ENCODE measurements at regions of chr7 and their contacts with region 1.

Region 1: GRCh38 chr7:18140943-18141342 is 113.3 kb upstream of the PRPS1L1 start:
- DNase-seq: no peak
- ATAC-seq: no peak
- H3K4me3 ChIP-seq: no peak overlapping the region
- H3K4me3 Mint-ChIP-seq: no peak overlapping the region
- H3K27ac ChIP-seq: no peak overlapping the region
- H3K27ac Mint-ChIP-seq: no peak overlapping the region
- H3K4me1 ChIP-seq: no peaks in the 10 kb centered on the region
- H3K4me1 Mint-ChIP-seq: no peaks in the 10 kb centered on the region
- H3K27me3 ChIP-seq: no peaks in the 10 kb centered on the region
- H3K27me3 Mint-ChIP-seq: peaks cover 0 to 3% of the 10 kb centered on the region in 2 donors

Region 2: GRCh38 chr7:18119985-18120384 is 21.0 kb before region 1 on chr7:
- CTCF ChIA-PET with region 1: no interaction called
- POLR2A ChIA-PET with region 1: no interaction called
- DNase-seq: no peak
- ATAC-seq: no peak
- H3K4me3 ChIP-seq: no peak overlapping the region
- H3K4me3 Mint-ChIP-seq: no peak overlapping the region
- H3K27ac ChIP-seq: no peak overlapping the region
- H3K27ac Mint-ChIP-seq: no peak overlapping the region
- H3K4me1 ChIP-seq: no peaks in the 10 kb centered on the region
- H3K4me1 Mint-ChIP-seq: no peaks in the 10 kb centered on the region
- H3K27me3 ChIP-seq: no peaks in the 10 kb centered on the region
- H3K27me3 Mint-ChIP-seq: peaks cover 0 to 3% of the 10 kb centered on the region in 2 donors

Region 3: GRCh38 chr7:18165166-18165780 is 24.3 kb after region 1 on chr7:
- CTCF ChIA-PET with region 1: no interaction called
- POLR2A ChIA-PET with region 1: interaction called in 1 of 2 experiments, 11 read pairs
- DNase-seq: no peak
- ATAC-seq: no peak
- H3K4me3 ChIP-seq: no peak overlapping the region
- H3K4me3 Mint-ChIP-seq: no peak overlapping the region
- H3K27ac ChIP-seq: no peak overlapping the region
- H3K27ac Mint-ChIP-seq: no peak overlapping the region
- H3K4me1 ChIP-seq: no peaks in the 10 kb centered on the region
- H3K4me1 Mint-ChIP-seq: no peaks in the 10 kb centered on the region
- H3K27me3 ChIP-seq: no peaks in the 10 kb centered on the region
- H3K27me3 Mint-ChIP-seq: no peaks in the 10 kb centered on the region